ENCODE measurements at regions of chrX and their contacts with region 1.

Region 1: DNA sequence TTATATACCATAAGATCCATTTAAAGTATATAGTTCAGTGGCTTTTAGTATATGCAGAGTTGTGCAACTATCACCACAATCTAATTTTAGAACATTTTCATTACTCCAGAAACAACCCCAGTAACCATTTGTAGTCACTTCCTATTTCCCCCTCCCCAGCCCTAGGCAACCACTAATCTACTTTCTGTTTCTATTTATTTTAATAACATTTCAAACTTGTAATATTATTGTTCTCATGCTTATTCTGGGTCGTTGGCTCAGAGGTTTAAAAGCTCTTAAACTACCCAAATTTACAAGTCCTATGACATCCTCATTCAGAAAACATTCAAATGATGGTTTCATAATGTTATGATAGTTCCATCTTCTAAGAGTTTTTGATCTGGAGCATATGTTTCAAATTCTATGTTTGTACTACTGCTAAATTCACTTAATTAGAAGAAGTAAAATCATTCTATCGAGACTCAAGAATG is 18.4 kb downstream of the XIAP start:
- DNase-seq: peak; percentile 40
- ATAC-seq: peak; percentile 63
- H3K4me3 ChIP-seq: peak overlapping the region in 2 of 5 experiments; percentile 31 to 41
- H3K4me3 Mint-ChIP-seq: peak overlapping the region; percentile 73
- H3K27ac ChIP-seq: peak overlapping the region; percentile 55 to 76
- H3K27ac Mint-ChIP-seq: peak overlapping the region; percentile 46
- H3K4me1 ChIP-seq: peaks cover 9 to 14% of the 10 kb centered on the region in 2 donors
- H3K4me1 Mint-ChIP-seq: peaks cover 30% of the 10 kb centered on the region
- H3K27me3 ChIP-seq: no peaks in the 10 kb centered on the region
- H3K27me3 Mint-ChIP-seq: no peaks in the 10 kb centered on the region
- CTCF ChIP-seq: no peak

Region 2: GRCh38 chrX:123732670-123733363 is 145.5 kb before region 1 on chrX and contains the start of gene THOC2:
- CTCF ChIA-PET with region 1: no interaction called
- POLR2A ChIA-PET with region 1: no interaction called
- intact Hi-C with region 1: no loop called
- DNase-seq: peak; percentile 83
- ATAC-seq: peak; percentile 90
- H3K4me3 ChIP-seq: peak within 1 kb of the TSS; percentile 39 to 84 (median 82)
- H3K4me3 Mint-ChIP-seq: peak within 1 kb of the TSS; percentile 94
- H3K27ac ChIP-seq: peak within 1 kb of the TSS; percentile 49 to 76
- H3K27ac Mint-ChIP-seq: peak within 1 kb of the TSS; percentile 94
- H3K4me1 ChIP-seq: peaks cover 10 to 11% of the 10 kb centered on the region in 2 donors
- H3K4me1 Mint-ChIP-seq: peaks cover 37% of the 10 kb centered on the region
- H3K27me3 ChIP-seq: no peaks in the 10 kb centered on the region
- H3K27me3 Mint-ChIP-seq: no peaks in the 10 kb centered on the region
- CTCF ChIP-seq: no peak
- total RNA-seq, gene THOC2: 113 and 126 TPM in 2 replicates

Region 3: GRCh38 chrX:123859846-123860838 is 18.1 kb before region 1 on chrX and contains the start of gene XIAP:
- CTCF ChIA-PET with region 1: no interaction called
- POLR2A ChIA-PET with region 1: no interaction called
- intact Hi-C with region 1: loop called (anchors 2 kb)
- DNase-seq: peak; percentile 83
- ATAC-seq: peak; percentile 84
- H3K4me3 ChIP-seq: peak within 1 kb of the TSS; percentile 69 to 90 (median 77)
- H3K4me3 Mint-ChIP-seq: peak within 1 kb of the TSS; percentile 95
- H3K27ac ChIP-seq: peak within 1 kb of the TSS; percentile 84 to 92
- H3K27ac Mint-ChIP-seq: peak within 1 kb of the TSS; percentile 97
- H3K4me1 ChIP-seq: peaks cover 6 to 11% of the 10 kb centered on the region in 2 donors
- H3K4me1 Mint-ChIP-seq: peaks cover 24% of the 10 kb centered on the region
- H3K27me3 ChIP-seq: no peaks in the 10 kb centered on the region
- H3K27me3 Mint-ChIP-seq: no peaks in the 10 kb centered on the region
- CTCF ChIP-seq: no peak
- total RNA-seq, gene XIAP: 36.2 and 48.1 TPM in 2 replicates

Measured in B cell (primary cell).